ENCODE measurements at regions of chr10 and their contacts with region 1.

Region 1: DNA sequence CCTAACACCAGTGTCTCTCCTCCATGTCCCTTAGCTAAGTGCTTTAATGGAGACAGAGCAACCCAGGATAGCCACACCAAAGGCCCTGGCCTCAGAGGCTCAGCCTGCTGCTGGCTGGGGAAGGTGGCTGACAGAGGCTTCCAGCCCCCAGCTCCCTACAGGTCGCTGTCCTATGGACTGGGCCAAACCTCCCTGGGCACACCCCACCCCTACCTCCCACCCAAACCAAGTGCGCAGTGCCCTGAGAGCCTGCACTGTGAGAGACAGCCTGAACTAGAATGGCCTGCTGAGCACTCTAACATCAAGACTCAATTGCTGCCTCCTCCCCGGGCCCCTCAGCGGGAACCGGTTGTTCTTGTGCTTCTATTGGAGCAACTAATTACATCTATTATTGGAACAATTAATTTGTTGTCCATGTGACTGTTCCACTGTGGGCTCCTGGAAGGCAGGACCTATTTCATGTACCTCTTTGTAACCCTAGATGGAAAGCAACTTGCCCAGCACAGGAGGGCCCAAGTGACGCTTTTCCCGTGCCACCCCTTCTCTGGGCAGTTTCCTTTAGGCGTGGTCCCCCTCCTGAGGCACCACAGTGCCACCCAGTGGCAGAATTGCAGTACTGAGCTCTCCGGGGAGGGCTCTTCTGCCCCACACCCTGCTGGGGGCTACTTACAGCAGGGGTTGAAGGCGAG is 63.6 kb upstream of the WAPL start:
- DNase-seq: peak; percentile 44
- H3K4me3 ChIP-seq: no peak overlapping the region
- H3K27ac ChIP-seq: no peak overlapping the region
- H3K4me1 ChIP-seq: no peaks in the 10 kb centered on the region
- H3K27me3 ChIP-seq: no peaks in the 10 kb centered on the region
- CTCF ChIP-seq: peak; percentile 85 to 96

Region 2: GRCh38 chr10:86521678-86522509 is 63.3 kb before region 1 on chr10 and contains the start of gene WAPL:
- CTCF ChIA-PET with region 1: no interaction called
- dilution Hi-C with region 1: no loop called
- in situ Hi-C with region 1: no loop called
- intact Hi-C with region 1: loop called (anchors 1 kb)
- DNase-seq: peak; percentile 92
- H3K4me3 ChIP-seq: peak within 1 kb of the TSS; percentile 84 to 96 (median 96)
- H3K27ac ChIP-seq: peak within 1 kb of the TSS; percentile 77
- H3K4me1 ChIP-seq: peaks cover 10% of the 10 kb centered on the region
- H3K27me3 ChIP-seq: no peaks in the 10 kb centered on the region
- CTCF ChIP-seq: no peak
- total RNA-seq, gene WAPL: 37.5 to 37.8 TPM

Region 3: DNA sequence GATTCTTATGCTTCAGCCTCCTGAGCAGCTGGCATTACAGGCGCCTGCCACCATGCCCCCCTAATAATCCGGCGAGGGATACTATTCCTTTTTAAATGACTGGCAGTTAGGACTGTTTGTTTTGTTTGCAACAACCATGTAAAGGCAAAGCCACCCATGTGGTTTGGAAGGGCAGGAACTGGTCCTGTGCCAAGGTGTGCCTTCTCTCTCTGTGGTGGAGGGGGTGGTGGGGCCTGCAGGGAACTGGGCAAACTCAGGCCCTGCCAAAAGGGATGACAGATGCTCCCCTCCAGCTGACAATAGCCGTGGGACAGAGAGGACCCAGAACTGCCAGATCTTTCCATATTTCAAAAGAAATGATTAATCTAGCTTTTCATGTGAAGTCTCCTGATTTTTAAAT is 40.1 kb before region 1 on chr10:
- CTCF ChIA-PET with region 1: no interaction called
- dilution Hi-C with region 1: no loop called
- in situ Hi-C with region 1: no loop called
- intact Hi-C with region 1: loop called (anchors 1 kb)
- DNase-seq: no peak
- H3K4me3 ChIP-seq: no peak overlapping the region
- H3K27ac ChIP-seq: no peak overlapping the region
- H3K4me1 ChIP-seq: no peaks in the 10 kb centered on the region
- H3K27me3 ChIP-seq: no peaks in the 10 kb centered on the region
- CTCF ChIP-seq: no peak

Region 4: DNA sequence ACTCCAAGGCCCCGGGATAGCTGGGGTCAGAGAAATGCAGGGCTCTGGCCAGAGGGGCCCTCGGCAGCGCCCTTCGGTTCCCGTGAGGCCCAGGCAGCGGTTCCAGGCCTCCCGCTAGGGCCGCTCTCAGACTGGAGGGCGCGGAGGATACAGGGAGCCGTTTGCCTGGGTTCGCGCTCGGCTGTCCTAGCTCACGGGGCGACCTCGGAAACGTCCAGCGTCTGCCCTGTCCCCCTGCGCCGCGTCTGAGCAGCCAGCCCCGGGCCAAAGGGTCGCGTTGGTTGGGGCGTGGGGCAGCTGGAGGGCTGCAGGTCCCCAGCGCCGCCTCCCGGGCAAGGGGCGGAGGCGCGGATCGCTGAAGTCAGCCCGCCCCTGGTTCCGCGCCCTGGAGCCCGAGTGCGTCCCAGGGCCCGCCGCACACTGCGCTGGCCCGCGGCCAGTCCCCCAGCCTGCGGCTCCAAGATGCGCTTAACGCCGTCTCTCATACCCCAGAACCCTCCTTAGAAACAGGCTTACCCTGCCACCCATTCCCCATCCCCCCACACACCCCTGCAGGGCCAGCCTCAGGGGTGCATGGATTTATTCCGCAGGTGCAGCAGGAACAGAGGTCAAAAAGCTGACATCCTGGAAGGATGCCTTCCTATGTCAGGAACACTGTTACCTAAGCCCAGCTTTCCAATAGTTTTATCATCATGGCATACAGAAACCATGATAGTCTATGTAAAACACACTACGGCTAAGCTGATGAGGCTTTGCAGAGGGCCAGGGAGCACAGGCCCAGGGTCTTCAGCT is 47.0 kb after region 1 on chr10:
- CTCF ChIA-PET with region 1: no interaction called
- dilution Hi-C with region 1: no loop called
- in situ Hi-C with region 1: no loop called
- intact Hi-C with region 1: no loop called
- DNase-seq: no peak
- H3K4me3 ChIP-seq: no peak overlapping the region
- H3K27ac ChIP-seq: no peak overlapping the region
- H3K4me1 ChIP-seq: peaks cover 7% of the 10 kb centered on the region
- H3K27me3 ChIP-seq: peaks cover 2% of the 10 kb centered on the region
- CTCF ChIP-seq: no peak

Region 5: DNA sequence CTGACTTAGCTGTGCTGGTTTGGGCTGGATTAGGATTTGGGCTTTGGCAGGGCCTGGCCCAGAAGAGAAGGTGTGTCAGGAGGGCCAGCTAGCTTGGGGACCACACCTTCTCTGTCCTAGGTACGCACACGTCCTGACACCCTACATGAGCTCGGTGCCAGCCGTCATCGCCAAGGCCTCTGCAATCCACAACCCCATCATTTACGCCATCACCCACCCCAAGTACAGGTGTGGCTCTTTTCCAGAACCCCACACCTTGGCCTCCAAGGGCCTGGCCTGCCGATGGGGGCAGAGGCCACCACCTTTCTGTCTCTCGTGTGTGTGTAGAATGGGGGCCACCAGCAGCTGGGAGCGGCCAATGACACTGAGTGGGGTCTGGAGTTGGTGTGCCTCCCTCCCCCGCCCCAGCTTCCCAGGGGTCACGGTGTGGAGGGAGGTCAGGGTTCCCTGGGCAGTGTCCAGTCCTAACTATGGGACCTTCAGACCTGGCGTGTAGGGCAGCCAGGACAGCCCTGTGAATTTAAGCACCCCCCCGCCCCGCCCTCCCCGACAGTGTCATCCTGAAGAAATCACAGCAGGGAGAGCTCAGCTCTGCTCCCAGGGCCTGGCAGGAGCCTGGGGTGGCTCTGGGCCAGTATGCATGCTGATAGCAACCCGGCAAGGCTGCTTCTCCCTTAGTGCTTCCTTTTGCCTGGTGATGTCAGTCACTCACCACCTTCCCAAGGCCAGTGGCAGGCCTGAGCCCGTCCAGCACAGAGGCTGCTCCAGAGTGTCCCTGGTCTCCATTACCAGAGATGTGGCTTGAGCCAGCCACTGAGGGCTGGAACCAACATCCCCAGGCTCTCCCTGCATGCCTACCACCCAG is 76.2 kb after region 1 on chr10:
- CTCF ChIA-PET with region 1: interaction called, 12 read pairs
- dilution Hi-C with region 1: no loop called
- in situ Hi-C with region 1: no loop called
- intact Hi-C with region 1: no loop called
- DNase-seq: peak; percentile 25
- H3K4me3 ChIP-seq: no peak overlapping the region
- H3K27ac ChIP-seq: no peak overlapping the region
- H3K4me1 ChIP-seq: no peaks in the 10 kb centered on the region
- H3K27me3 ChIP-seq: no peaks in the 10 kb centered on the region
- CTCF ChIP-seq: no peak